PC-3 (cell line): ENCODE measurements at regions of chr1 and their contacts with region 1.

Region 1: DNA sequence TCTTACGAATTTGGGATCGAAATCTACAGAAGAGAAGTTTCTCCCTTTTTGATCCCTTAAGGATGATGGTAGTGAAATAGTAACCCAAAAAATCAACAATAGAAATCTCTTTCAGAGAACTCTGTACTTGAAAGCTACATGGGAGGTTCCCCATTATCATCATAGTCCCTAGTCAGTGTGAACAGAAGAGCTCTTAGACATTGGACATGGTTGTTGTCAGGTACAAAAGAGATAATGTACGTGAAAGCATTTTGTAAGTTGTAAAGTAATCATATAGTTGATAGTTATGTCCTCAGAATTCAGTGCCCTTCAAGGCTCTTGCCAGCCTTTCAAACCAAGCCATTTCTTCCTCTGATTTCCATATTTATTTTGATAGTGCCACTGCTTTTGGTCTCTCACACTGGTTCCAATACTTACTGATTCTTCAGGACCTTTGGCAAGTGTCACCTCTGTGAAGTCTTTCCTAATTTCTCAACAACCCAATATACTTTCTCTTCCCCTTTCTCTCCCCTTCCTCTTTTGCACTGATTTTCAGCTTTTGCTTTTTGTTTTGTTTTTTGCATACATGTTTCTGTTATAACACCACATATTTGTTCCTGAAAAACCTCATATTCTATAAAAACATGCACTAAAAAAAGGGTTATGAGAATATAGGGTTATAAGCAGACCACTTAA is 22.4 kb downstream of the VPS45 start:
- DNase-seq: no peak
- ATAC-seq: no peak
- H3K4me3 ChIP-seq: no peak overlapping the region
- H3K27ac ChIP-seq: no peak overlapping the region
- H3K4me1 ChIP-seq: no peaks in the 10 kb centered on the region
- H3K27me3 ChIP-seq: no peaks in the 10 kb centered on the region
- CTCF ChIP-seq: no peak

Region 2: GRCh38 chr1:150121236-150121862 is 31.4 kb after region 1 on chr1:
- CTCF ChIA-PET with region 1: no interaction called
- POLR2A ChIA-PET with region 1: no interaction called
- intact Hi-C with region 1: loop called (anchors 5 kb)
- DNase-seq: peak; percentile 78
- ATAC-seq: peak; percentile 87
- H3K4me3 ChIP-seq: no peak overlapping the region
- H3K27ac ChIP-seq: peak overlapping the region; percentile 42
- H3K4me1 ChIP-seq: peaks cover 21% of the 10 kb centered on the region
- H3K27me3 ChIP-seq: no peaks in the 10 kb centered on the region
- CTCF ChIP-seq: no peak